Transverse colon (tissue), 4 donors: ENCODE measurements at regions of chr11 and their contacts with region 1.

Region 1: DNA sequence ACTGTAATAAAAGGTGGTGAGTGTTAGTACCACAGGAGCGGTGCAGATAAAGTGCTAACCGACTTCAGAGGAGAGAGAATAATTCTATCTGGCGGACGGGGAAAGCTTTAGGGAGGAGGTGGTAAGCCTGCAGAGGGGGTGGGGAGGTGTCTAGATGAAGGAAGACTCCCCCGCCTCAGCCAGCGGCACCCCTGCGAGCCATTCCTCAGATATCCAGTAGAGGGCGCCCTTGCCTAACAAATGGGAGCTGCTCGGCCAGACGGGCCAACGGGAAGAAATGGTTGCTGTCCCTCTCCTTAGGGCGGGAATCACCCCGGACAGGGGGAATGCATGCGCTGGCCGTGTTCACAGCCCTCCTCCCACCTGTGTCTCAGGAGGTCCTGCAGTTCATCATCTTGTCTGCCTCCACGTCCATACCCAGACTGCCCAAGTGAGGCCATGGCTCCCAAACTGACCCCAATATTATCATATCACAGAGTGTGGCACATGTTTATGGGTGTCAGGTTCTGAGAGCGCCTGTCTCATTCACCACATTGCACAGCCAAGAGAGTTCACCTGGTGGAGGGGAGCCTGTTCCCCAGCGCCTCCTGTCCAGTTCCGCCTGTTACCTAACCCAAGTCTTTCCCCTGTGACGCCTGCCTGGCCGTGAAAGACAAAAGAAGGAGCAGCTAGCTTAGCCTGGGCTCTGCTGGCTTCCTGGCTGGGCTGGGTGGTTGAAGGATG is 85.5 kb downstream of the ST3GAL4 start:
- DNase-seq: peak; percentile 79
- H3K4me3 ChIP-seq: no peak overlapping the region
- H3K27ac ChIP-seq: no peak overlapping the region
- H3K4me1 ChIP-seq: peaks cover 0 to 4% (median 2%) of the 10 kb centered on the region in 4 donors
- H3K27me3 ChIP-seq: peaks cover 23% of the 10 kb centered on the region
- CTCF ChIP-seq: peak; percentile 96 to 99 (median 97)
- EP300 ChIP-seq: no peak
- POLR2A ChIP-seq: no peak

Region 2: GRCh38 chr11:126480410-126481302 is 39.7 kb after region 1 on chr11:
- in situ Hi-C with region 1: loop called in 1 of 4 experiments (anchors 5 kb)
- intact Hi-C with region 1: no loop called
- DNase-seq: peak; percentile 83
- H3K4me3 ChIP-seq: no peak overlapping the region
- H3K27ac ChIP-seq: peak overlapping the region; percentile 47 to 73 (median 58)
- H3K4me1 ChIP-seq: peaks cover 5 to 15% (median 5%) of the 10 kb centered on the region in 4 donors
- H3K27me3 ChIP-seq: peaks cover 59% of the 10 kb centered on the region
- CTCF ChIP-seq: peak; percentile 92 to 96 (median 95)
- EP300 ChIP-seq: no peak
- POLR2A ChIP-seq: no peak

Region 3: DNA sequence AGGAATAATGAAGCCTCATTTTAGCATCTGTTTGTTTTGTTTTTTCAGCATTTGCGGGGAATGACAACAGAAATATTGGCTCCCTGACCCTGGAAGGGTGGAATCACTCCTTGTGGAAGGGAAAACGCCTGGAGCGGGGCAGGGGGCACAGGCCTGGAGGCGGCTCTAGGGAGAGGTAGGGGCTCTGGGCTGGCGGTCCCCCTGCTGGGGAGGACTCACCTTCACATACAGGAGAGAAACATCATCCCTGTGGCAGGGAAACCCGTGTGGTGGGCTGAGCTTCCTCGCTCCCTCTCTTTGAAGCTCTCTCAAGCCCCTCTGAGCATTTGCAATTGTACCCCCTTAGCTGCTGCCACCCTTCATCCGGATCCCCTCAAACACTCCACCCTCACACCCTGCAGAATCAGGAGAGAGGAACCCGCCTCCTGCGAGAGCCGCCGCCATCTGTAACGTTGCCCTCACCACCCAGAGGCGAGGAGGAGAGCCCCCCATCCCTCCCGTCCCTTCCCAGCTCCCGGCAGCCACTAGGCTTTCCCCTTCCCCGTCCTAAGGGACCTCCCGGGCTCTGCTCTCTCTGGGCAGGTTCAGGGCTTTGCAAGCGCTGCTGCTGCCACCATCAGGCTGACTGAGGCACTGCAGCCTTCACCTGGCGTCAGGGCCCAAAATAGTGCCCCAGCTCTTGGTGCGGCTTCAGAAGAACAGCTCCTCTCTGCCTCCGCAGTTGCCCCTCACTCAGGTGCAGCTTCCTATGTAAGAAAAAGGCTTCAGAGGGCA is 549.2 kb after region 1 on chr11:
- in situ Hi-C with region 1: loop called in 3 of 4 experiments (anchors 5 to 25 kb)
- intact Hi-C with region 1: loop called (anchors 5 kb)
- DNase-seq: peak; percentile 66
- H3K4me3 ChIP-seq: no peak overlapping the region
- H3K27ac ChIP-seq: no peak overlapping the region
- H3K4me1 ChIP-seq: no peaks in the 10 kb centered on the region
- H3K27me3 ChIP-seq: peaks cover 30% of the 10 kb centered on the region
- CTCF ChIP-seq: peak; percentile 82 to 95 (median 92)
- EP300 ChIP-seq: no peak
- POLR2A ChIP-seq: no peak

Region 4: GRCh38 chr11:127345819-127346459 is 905.0 kb after region 1 on chr11:
- in situ Hi-C with region 1: loop called in 1 of 4 experiments (anchors 10 kb)
- intact Hi-C with region 1: loop called (anchors 5 kb)
- DNase-seq: no peak
- H3K4me3 ChIP-seq: no peak overlapping the region
- H3K27ac ChIP-seq: no peak overlapping the region
- H3K4me1 ChIP-seq: no peaks in the 10 kb centered on the region
- H3K27me3 ChIP-seq: no peaks in the 10 kb centered on the region
- CTCF ChIP-seq: peak; percentile 37 to 58 (median 44)
- EP300 ChIP-seq: no peak
- POLR2A ChIP-seq: no peak